Psoas muscle (tissue), 8 donors: ENCODE measurements at regions of chr16 and their contacts with region 1.

Region 1: GRCh38 chr16:30740364-30741251 is 7.6 kb upstream of the PHKG2 start:
- DNase-seq: peak; percentile 83 to 91
- ATAC-seq: peak; percentile 62 to 77 (median 68)
- H3K4me3 ChIP-seq: no peak overlapping the region
- H3K27ac ChIP-seq: peak overlapping the region; percentile 19
- H3K4me1 ChIP-seq: no peaks in the 10 kb centered on the region
- H3K27me3 ChIP-seq: no peaks in the 10 kb centered on the region
- CTCF ChIP-seq: no peak

Region 2: GRCh38 chr16:30698139-30698815 is 42.3 kb before region 1 on chr16:
- intact Hi-C with region 1: loop called in 1 of 2 experiments (anchors 5 kb)
- DNase-seq: peak; percentile 99 to 100
- ATAC-seq: peak; percentile 88 to 94 (median 91)
- H3K4me3 ChIP-seq: peak overlapping the region; percentile 98
- H3K27ac ChIP-seq: peak overlapping the region; percentile 95
- H3K4me1 ChIP-seq: peaks cover 17% of the 10 kb centered on the region
- H3K27me3 ChIP-seq: no peaks in the 10 kb centered on the region
- CTCF ChIP-seq: no peak

Region 3: GRCh38 chr16:30710971-30711370 is 29.6 kb before region 1 on chr16:
- intact Hi-C with region 1: loop called (anchors 5 kb)
- DNase-seq: no peak
- ATAC-seq: no peak
- H3K4me3 ChIP-seq: no peak overlapping the region
- H3K27ac ChIP-seq: no peak overlapping the region
- H3K4me1 ChIP-seq: no peaks in the 10 kb centered on the region
- H3K27me3 ChIP-seq: no peaks in the 10 kb centered on the region
- CTCF ChIP-seq: no peak

Region 4: GRCh38 chr16:30724641-30725417 is 15.8 kb before region 1 on chr16:
- intact Hi-C with region 1: loop called in 1 of 2 experiments (anchors 2 kb)
- DNase-seq: no peak
- ATAC-seq: peak in 3 of 4 donors; percentile 24 to 36 (median 31)
- H3K4me3 ChIP-seq: no peak overlapping the region
- H3K27ac ChIP-seq: peak overlapping the region; percentile 23
- H3K4me1 ChIP-seq: no peaks in the 10 kb centered on the region
- H3K27me3 ChIP-seq: no peaks in the 10 kb centered on the region
- CTCF ChIP-seq: no peak